ENCODE measurements at regions of chr13 and their contacts with region 1.

Region 1: GRCh38 chr13:41019011-41019487 is at the start of gene ELF1:
- DNase-seq: no peak
- ATAC-seq: peak; percentile 89
- H3K4me3 Mint-ChIP-seq: peak within 1 kb of the TSS; percentile 90
- H3K27ac Mint-ChIP-seq: peak within 1 kb of the TSS; percentile 95
- H3K4me1 Mint-ChIP-seq: peaks cover 31% of the 10 kb centered on the region
- H3K27me3 Mint-ChIP-seq: no peaks in the 10 kb centered on the region
- total RNA-seq, gene ELF1: 134 to 142 TPM

Region 2: DNA sequence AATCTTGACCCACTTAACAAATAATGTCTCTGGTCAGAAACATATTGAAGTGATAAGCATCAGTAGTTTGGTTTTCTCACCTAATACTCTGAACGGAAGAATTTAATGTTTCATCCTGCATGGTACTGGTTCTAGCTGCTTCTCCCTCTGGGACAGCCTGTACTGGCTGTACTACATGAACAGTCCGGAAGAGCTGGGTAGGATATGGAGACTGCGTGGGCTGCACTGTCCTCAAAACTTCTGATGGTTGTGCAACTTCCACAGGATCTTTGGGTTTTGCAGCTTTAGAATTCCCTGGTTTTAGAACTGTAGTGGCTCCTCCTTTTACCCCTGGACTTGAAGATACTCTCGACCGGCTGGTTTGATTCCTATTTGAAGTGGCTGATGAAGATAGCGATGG is 78.2 kb before region 1 on chr13:
- POLR2A ChIA-PET with region 1: no interaction called
- DNase-seq: no peak
- ATAC-seq: no peak
- H3K4me3 Mint-ChIP-seq: no peak overlapping the region
- H3K27ac Mint-ChIP-seq: no peak overlapping the region
- H3K4me1 Mint-ChIP-seq: peaks cover 11% of the 10 kb centered on the region
- H3K27me3 Mint-ChIP-seq: no peaks in the 10 kb centered on the region

Region 3: GRCh38 chr13:40974460-40975407 is 44.3 kb before region 1 on chr13:
- POLR2A ChIA-PET with region 1: interaction called, 39 read pairs
- DNase-seq: no peak
- ATAC-seq: peak; percentile 79
- H3K4me3 Mint-ChIP-seq: peak overlapping the region; percentile 62
- H3K27ac Mint-ChIP-seq: peak overlapping the region; percentile 63
- H3K4me1 Mint-ChIP-seq: peaks cover 76% of the 10 kb centered on the region
- H3K27me3 Mint-ChIP-seq: no peaks in the 10 kb centered on the region

Region 4: DNA sequence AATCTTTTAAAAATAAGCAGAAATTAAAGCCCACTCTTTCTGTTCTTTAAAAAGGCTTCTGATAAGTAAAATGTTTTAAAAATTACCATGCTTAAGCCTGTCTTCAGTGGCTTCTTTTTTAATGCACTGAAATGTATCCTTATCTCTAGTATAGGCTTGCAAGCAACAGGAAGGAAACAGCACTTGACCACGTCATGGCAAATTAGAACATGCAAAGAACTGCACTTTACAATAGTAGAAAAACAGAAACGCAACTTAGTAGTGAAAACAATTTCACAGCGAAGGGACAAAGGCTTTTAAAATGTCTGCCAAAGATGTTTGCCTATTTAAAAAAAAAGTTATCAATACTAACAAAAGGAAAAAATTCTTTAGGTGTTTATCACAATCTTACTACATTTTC is 36.3 kb before region 1 on chr13:
- POLR2A ChIA-PET with region 1: interaction called, 39 read pairs
- DNase-seq: no peak
- ATAC-seq: peak; percentile 62
- H3K4me3 Mint-ChIP-seq: peak overlapping the region; percentile 90
- H3K27ac Mint-ChIP-seq: peak overlapping the region; percentile 92
- H3K4me1 Mint-ChIP-seq: peaks cover 60% of the 10 kb centered on the region
- H3K27me3 Mint-ChIP-seq: no peaks in the 10 kb centered on the region

Region 5: DNA sequence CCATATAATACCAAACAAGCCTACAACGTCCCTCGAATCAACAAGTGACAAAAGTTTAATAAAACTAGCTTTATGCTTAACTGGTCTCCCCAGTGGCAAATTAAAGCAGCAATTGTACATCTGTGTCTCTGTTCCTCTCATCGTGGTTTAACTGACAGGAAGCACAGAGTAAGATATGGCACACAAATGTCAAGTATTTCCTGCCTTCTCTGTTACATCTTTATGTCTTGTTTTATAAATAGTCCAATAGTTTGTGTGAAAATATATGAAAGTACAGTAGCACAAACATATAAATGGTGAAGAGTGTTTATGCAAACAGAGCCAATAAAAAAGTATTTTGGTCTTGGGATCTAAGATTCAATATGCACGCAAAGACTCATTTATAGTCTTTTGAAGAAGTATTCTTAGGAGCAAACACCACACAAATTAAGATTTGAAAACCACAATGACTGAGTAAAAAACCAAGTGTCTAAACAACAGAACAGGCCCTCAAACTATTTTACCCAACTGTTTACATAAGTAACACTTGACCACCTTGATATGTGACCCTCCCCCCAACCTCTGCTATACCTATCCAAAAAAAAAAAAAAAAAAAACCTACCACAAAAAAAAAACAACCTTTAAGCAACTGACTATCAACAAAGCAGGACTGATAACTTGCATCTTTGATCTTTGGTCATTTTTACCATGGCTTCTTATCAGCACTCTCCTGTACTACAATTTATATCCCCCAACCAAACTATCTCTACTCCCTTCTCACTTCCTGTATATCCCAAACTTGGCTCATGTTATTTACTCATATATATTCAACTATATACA is 14.0 kb before region 1 on chr13:
- POLR2A ChIA-PET with region 1: interaction called, 39 read pairs
- DNase-seq: no peak
- ATAC-seq: peak; percentile 79
- H3K4me3 Mint-ChIP-seq: peak overlapping the region; percentile 74
- H3K27ac Mint-ChIP-seq: peak overlapping the region; percentile 85
- H3K4me1 Mint-ChIP-seq: peaks cover 57% of the 10 kb centered on the region
- H3K27me3 Mint-ChIP-seq: no peaks in the 10 kb centered on the region

Region 6: DNA sequence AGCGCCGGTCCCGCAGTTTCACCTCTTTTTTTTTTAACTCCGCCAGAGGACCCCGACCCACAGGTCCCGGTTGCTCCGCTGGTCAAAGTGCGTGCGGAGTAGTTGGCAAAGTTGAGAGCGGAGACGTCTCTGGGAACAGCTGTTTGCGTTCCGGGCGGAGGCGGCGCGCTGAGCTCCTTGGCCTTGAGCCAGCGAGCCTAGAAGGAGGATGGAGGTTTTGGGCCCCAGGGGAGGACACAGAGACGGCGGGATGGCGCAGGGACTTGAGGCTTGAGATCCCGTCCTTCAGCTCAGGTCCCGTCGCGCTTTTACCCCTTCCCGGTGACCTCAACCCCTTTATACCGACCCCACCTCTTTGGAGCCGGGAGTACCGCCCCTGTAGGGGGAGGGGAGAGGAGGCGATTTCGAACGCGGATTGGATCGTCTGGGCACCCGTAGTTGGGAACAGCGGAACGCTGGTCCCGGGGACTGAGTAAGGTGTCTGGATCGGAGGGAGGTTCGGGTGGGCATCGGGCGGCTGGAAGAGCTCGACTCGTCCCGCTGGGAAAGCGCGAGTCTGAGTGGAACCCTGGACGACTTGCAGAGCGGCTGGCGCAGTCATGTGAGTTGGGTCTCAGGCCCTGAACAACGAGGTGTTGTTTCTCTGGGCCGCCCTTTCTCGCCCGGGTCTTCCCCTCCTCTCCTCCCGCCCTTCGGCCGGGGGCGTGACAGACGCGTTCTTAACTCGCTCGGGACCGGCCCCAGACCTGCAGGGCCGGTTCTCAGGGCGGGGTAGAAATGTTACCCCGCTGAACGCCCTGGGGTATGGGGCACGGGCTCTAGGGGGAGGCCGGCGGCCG is 42.2 kb after region 1 on chr13 and contains the start of gene WBP4:
- POLR2A ChIA-PET with region 1: interaction called, 24 read pairs
- DNase-seq: peak; percentile 90
- ATAC-seq: peak; percentile 77
- H3K4me3 Mint-ChIP-seq: peak within 1 kb of the TSS; percentile 97
- H3K27ac Mint-ChIP-seq: peak within 1 kb of the TSS; percentile 96
- H3K4me1 Mint-ChIP-seq: peaks cover 49% of the 10 kb centered on the region
- H3K27me3 Mint-ChIP-seq: no peaks in the 10 kb centered on the region
- total RNA-seq, gene WBP4: 9.3 to 9.9 TPM

Region 7: GRCh38 chr13:41107584-41108014 is 88.5 kb after region 1 on chr13:
- POLR2A ChIA-PET with region 1: no interaction called
- DNase-seq: no peak
- ATAC-seq: no peak
- H3K4me3 Mint-ChIP-seq: no peak overlapping the region
- H3K27ac Mint-ChIP-seq: no peak overlapping the region
- H3K4me1 Mint-ChIP-seq: no peaks in the 10 kb centered on the region
- H3K27me3 Mint-ChIP-seq: no peaks in the 10 kb centered on the region

Region 8: DNA sequence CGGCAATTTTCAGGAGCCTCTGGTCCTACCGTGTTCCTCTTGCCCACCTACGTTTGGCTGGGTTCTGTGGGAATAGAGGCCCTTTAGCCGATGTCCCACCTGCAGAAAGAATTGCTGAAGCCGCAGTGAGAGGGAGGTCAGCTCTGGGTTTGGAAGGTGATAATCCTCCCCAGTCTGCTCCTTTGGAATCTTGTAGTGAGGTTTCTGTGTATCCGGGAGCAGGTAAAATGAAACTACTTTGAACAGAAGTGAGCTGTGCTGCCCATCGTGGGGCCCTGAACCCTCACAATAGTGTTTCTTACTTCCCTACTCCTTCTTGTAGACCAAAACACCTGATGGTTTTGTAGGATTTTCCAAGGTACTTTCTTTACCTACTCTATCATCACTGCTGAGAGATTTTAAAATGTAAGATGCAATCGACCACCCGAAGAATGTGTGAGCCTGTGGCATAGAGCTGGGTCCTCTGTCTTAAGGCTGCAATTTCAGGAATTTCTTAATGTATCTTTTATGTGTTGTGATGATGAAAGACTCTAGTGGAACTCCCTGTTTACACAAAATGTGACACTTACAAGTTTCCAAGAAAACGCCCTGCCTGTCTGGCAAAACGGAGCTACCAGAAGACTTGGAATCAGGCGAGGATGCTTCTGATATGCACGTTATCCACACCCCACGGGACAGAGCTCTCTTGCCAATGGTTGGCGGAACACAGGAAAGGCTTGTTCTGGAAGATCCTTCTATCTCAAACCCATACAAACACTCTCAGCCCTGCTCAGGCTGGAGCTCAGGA is 514.4 kb after region 1 on chr13:
- POLR2A ChIA-PET with region 1: no interaction called
- DNase-seq: no peak
- ATAC-seq: no peak
- H3K4me3 Mint-ChIP-seq: no peak overlapping the region
- H3K27ac Mint-ChIP-seq: no peak overlapping the region
- H3K4me1 Mint-ChIP-seq: no peaks in the 10 kb centered on the region
- H3K27me3 Mint-ChIP-seq: peaks cover 6% of the 10 kb centered on the region